Activated naive CD4-positive, alpha-beta T cell treated with anti-CD3 and anti-CD28 coated beads, Interleukin-2, amount 10 ng/mL, durations not matched to agents 7 days and 5 days (primary cell): ENCODE measurements at regions of chrX and their contacts with region 1.

Region 1: DNA sequence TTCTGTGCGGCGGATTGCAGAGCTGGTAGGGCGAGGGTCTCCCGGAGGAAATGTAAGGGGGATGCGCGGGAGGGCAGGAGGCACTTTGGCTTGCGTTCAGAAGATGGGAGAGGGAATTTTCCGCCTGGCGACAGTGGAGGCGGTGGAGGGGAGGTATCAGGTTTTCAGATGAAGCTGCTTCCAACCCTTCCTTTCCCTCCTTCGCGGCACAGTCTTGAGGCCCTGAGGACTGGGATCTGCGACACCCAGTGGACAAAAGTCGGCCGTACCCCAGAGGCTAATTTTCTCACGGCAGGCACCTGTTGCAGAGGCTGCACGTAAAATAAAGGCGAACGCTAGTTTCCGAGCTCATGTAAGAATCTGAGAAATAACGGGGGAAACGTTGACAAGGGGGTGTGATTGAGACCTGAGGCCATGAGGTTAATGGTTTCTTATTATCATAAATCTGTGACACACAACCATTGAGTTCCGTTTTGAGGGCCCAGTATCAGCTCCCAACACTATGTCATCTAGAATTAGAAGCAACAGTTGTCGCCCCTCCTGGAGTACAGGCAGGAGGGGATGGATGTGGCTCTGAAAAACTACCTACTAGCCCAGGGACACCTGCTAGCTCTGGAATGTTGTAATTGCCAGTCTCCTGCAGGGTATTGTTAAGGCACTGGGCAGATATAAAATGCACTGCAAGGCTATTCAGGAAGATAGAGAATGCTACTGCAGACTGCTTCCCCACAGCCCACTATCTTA is 1.1 kb downstream of the ZCCHC18 start:
- DNase-seq: peak; percentile 66
- H3K4me3 Mint-ChIP-seq: peak overlapping the region; percentile 80
- H3K27ac Mint-ChIP-seq: no peak overlapping the region
- H3K4me1 Mint-ChIP-seq: peaks cover 29% of the 10 kb centered on the region
- H3K27me3 Mint-ChIP-seq: peaks cover 4% of the 10 kb centered on the region

Region 2: GRCh38 chrX:104098151-104098808 is 15.1 kb before region 1 on chrX:
- CTCF ChIA-PET with region 1: interaction called, 14 read pairs
- DNase-seq: peak; percentile 63
- H3K4me3 Mint-ChIP-seq: no peak overlapping the region
- H3K27ac Mint-ChIP-seq: no peak overlapping the region
- H3K4me1 Mint-ChIP-seq: no peaks in the 10 kb centered on the region
- H3K27me3 Mint-ChIP-seq: peaks cover 4% of the 10 kb centered on the region

Region 3: GRCh38 chrX:104136241-104137019 is 23.0 kb after region 1 on chrX:
- CTCF ChIA-PET with region 1: interaction called, 15 read pairs
- DNase-seq: peak; percentile 62
- H3K4me3 Mint-ChIP-seq: no peak overlapping the region
- H3K27ac Mint-ChIP-seq: no peak overlapping the region
- H3K4me1 Mint-ChIP-seq: peaks cover 10% of the 10 kb centered on the region
- H3K27me3 Mint-ChIP-seq: no peaks in the 10 kb centered on the region